WTC11 (cell line): ENCODE measurements at regions of chr19 and their contacts with region 1.

Region 1: DNA sequence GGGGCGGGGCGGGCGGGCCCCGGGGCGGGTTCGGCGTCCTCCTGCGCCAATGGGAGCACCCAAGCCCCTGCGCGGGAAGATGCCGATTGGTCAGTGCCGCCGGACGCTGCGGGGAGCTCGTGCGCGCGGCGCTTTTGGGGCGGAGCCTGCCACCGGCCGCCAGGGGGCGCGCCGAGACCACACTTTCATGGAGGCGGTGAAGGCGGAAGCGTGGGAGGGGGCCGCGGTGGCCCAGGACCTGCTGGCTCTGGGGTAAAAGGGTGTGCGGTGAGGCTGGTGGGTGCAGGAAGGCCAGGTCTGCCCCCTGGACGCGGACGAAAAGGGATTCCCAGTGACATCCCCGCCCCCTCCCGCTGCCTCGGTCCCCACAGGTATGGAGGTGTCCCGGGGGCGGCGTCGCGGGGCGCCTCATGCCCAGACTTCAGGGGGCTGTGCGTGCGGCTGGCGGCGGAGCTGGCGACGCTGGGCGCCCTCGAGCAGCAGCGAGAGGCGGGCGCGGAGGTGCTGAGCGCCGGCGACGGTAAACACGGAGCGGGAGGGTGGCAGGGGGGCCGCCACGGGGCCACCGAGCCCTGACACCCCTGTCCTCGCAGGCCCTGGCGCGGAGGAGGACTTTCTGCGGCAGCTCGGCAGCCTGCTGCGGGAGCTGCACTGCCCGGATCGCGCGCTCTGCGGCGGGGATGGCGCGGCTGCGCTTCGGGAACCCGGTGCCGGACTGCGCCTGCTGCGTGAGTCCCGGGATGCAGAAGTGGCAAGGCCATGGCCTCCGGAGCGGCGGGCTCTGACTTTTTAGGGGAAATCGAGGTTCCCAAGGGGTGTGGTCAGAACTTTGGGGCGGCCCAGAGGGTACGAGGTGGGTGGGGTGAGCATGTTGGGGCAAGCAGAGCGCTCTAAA is at the start of gene FAM98C:
- DNase-seq: peak; percentile 97
- ATAC-seq: peak; percentile 94
- H3K4me3 Mint-ChIP-seq: peak within 1 kb of the TSS; percentile 77
- H3K27ac Mint-ChIP-seq: no peak within 1 kb of the TSS
- H3K4me1 Mint-ChIP-seq: no peaks in the 10 kb centered on the region
- H3K27me3 Mint-ChIP-seq: peaks cover 57% of the 10 kb centered on the region
- CTCF ChIP-seq: peak; percentile 98
- total RNA-seq, gene FAM98C: 9.7 to 12.2 TPM (median 10.2 TPM) in 3 replicates

Region 2: GRCh38 chr19:38304866-38305429 is 98.3 kb before region 1 on chr19:
- CTCF ChIA-PET with region 1: interaction called, 11 read pairs
- POLR2A ChIA-PET with region 1: no interaction called
- DNase-seq: peak; percentile 90
- ATAC-seq: peak; percentile 86
- H3K4me3 Mint-ChIP-seq: peak overlapping the region; percentile 74
- H3K27ac Mint-ChIP-seq: peak overlapping the region; percentile 88
- H3K4me1 Mint-ChIP-seq: peaks cover 16% of the 10 kb centered on the region
- H3K27me3 Mint-ChIP-seq: peaks cover 4% of the 10 kb centered on the region
- CTCF ChIP-seq: no peak

Region 3: GRCh38 chr19:38417544-38418506 is 14.6 kb after region 1 on chr19:
- CTCF ChIA-PET with region 1: interaction called, 55 read pairs
- POLR2A ChIA-PET with region 1: no interaction called
- DNase-seq: peak; percentile 93
- ATAC-seq: peak; percentile 86
- H3K4me3 Mint-ChIP-seq: peak overlapping the region; percentile 84
- H3K27ac Mint-ChIP-seq: peak overlapping the region; percentile 89
- H3K4me1 Mint-ChIP-seq: peaks cover 13% of the 10 kb centered on the region
- H3K27me3 Mint-ChIP-seq: peaks cover 21% of the 10 kb centered on the region
- CTCF ChIP-seq: no peak

Region 4: DNA sequence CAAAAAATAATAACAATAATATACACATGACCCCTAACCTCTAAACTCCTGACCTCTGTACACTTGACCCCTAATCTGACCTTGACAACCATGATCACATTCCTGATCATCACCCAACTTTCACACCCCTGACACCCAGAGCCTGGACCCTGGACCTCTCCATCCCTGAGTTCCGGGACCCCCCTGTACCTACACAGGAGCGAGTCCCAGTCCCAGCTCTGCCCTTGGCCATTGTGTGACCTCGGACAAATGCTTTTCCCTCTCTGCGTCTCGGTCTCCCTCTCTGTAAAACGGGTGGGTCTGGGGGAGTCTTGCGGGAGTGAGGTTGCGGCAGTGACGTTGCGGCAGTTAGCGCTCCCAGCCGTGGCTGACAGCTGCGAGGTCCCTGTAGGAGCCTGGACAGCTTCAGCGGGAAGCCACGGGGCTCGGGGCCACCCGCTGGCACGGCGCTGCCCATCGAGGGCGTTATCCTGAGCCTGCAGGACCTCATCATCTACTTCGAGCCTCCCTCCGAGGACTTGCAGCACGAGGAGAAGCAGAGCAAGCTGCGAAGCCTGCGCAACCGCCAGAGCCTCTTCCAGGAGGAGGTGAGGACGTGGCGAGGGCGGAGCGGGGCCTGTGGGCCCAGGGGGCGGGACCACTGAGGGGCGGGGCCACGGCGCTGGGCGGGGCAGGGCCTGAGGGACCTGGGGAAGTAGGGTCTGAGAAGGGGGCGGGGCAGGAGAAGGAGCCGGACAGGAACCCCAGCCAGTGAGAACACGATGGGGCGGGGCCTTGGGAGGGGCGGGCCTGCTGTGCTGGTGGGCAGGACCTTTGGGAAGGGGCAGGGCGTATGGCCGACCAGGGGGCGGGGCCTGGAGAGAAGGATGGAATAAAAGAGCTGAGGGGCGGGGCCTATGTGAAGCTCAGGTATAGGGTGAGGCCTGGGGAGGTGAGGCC is 49.5 kb after region 1 on chr19:
- CTCF ChIA-PET with region 1: interaction called, 64 read pairs
- POLR2A ChIA-PET with region 1: interaction called, 3 read pairs
- DNase-seq: peak; percentile 100
- ATAC-seq: peak; percentile 98
- H3K4me3 Mint-ChIP-seq: no peak overlapping the region
- H3K27ac Mint-ChIP-seq: peak overlapping the region; percentile 86
- H3K4me1 Mint-ChIP-seq: peaks cover 9% of the 10 kb centered on the region
- H3K27me3 Mint-ChIP-seq: no peaks in the 10 kb centered on the region; the same call in 1 of the 2 replicates
- CTCF ChIP-seq: no peak

Region 5: GRCh38 chr19:38506723-38507550 is 103.7 kb after region 1 on chr19:
- CTCF ChIA-PET with region 1: interaction called, 24 read pairs
- POLR2A ChIA-PET with region 1: no interaction called
- DNase-seq: peak; percentile 100
- ATAC-seq: peak; percentile 92
- H3K4me3 Mint-ChIP-seq: peak overlapping the region; percentile 20; the same call in 1 of the 2 replicates
- H3K27ac Mint-ChIP-seq: peak overlapping the region; percentile 8; the same call in 1 of the 2 replicates
- H3K4me1 Mint-ChIP-seq: peaks cover 9% of the 10 kb centered on the region; the same call in 1 of the 2 replicates
- H3K27me3 Mint-ChIP-seq: no peaks in the 10 kb centered on the region
- CTCF ChIP-seq: no peak

Region 6: DNA sequence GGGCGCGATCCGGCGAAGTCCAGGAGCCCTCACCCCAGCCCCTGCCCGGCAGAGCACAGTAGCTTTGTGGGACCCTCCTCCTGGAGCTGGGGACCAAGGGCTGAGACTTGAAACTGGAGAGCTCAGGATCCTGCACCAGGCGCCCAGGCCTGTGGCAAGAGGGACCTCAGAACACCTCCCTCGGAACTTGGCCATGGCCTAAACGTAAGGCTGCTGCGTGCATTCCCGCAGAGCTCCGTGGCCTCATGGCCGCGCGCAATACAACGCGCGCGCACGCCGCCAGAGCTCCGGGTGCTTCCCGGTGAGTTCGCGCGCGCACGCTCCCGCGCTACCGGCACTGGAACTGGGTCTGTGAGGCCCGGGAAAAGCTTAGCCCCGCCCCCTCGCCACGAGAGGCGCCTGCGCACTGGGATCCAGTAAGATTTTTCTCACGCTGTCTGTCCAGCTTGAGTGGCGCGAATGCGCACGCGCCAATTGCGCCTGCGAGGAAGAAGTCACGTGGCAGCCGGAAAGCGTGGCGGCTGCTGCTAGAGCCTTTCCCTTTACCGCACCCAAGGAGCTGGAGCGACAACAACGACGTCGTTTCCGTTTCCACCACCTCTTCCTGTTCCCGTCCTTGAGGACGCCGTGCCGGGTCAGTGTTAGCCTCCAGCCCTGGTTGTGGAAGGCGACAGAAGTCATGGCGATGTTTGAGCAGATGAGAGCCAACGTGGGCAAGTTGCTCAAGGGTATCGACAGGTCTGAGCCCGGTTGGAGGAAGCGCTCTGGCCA is 215.6 kb after region 1 on chr19 and contains the start of gene EIF3K:
- CTCF ChIA-PET with region 1: interaction called, 32 read pairs
- POLR2A ChIA-PET with region 1: no interaction called
- DNase-seq: peak; percentile 99
- ATAC-seq: peak; percentile 85
- H3K4me3 Mint-ChIP-seq: peak within 1 kb of the TSS; percentile 100
- H3K27ac Mint-ChIP-seq: peak within 1 kb of the TSS; percentile 99
- H3K4me1 Mint-ChIP-seq: peaks cover 45% of the 10 kb centered on the region
- H3K27me3 Mint-ChIP-seq: no peaks in the 10 kb centered on the region; the same call in 1 of the 2 replicates
- CTCF ChIP-seq: no peak
- total RNA-seq, gene EIF3K: 389 to 416 TPM (median 410 TPM) in 3 replicates

Region 7: DNA sequence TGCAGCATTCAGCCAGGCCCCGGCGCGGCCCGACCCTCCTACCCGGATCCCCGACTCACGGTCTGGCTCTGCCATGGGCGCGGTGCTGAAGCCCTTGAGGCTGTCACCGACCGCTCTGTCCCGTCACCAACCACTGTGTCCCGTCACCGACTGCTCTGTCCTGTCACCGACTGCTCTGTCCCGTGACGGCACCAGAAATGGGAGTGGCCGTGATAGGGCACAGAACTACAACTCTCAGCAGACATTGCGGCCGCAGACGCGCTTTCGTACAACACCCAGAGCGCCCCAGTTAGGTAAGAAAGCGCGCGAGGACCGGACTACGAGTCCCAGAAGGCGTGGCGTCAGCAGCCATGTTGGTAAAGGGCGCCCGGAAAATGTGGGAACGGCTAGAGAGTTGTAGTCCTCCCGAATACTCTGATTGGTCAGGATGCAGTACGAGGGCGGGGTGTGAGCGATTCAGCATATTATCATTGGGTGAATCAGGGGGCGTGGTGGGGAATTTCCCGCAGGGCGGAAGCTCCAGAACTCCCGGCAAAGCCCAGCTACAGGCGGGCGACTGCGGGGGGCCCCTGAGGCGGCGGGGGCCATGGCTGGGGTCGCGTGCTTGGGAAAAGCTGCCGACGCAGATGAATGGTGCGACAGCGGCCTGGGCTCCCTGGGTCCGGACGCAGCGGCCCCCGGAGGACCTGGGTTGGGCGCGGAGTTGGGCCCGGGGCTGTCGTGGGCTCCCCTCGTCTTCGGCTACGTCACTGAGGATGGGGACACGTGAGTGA is 496.4 kb after region 1 on chr19 and contains the starts of genes NFKBIB and SIRT2:
- CTCF ChIA-PET with region 1: interaction called, 13 read pairs
- POLR2A ChIA-PET with region 1: no interaction called
- DNase-seq: peak; percentile 99
- ATAC-seq: peak; percentile 97
- H3K4me3 Mint-ChIP-seq: peak within 1 kb of the TSS; percentile 87
- H3K27ac Mint-ChIP-seq: peak within 1 kb of the TSS; percentile 94
- H3K4me1 Mint-ChIP-seq: peaks cover 12% of the 10 kb centered on the region
- H3K27me3 Mint-ChIP-seq: peaks cover 24% of the 10 kb centered on the region
- CTCF ChIP-seq: no peak
- total RNA-seq, gene NFKBIB: 29.6 to 39.8 TPM (median 30.6 TPM) in 3 replicates
- total RNA-seq, gene SIRT2: 9.5 to 10.7 TPM (median 10.2 TPM) in 3 replicates